Activated CD4-positive, alpha-beta T cell treated with anti-CD3 and anti-CD28 coated beads, Interleukin-2, amount 10 ng/mL, durations not matched to agents 24 days and 14 days (primary cell): ENCODE measurements at regions of chr12 and their contacts with region 1.

Region 1: DNA sequence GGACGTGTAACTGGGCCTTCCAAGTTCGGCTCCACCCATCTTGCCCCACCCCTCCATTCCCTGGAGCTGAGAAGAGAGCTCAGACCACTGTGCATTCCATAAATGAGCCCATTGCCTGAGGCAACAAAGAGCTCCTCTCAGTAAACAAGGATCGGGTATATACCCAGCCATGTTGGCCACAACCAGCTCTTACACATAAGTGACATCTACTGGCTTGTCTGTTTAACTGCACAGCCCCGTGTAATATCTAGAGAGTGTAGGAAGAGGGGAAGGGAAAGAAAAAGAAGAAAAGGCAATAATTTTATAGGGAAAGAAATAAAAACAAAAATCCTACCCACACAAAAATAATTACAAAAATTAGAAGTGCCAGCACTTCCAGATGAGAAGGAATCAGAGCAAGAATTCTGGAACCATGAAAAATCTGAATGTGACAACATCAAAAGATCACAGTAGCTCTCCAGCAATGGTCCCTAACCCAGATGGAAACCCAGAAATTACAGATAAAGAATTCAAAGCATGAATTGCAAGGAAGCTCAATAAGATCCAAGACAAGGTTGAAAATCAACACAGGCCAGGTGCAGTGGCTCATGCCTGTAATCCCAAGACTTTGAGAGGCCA is 308.1 kb downstream of the RPAP3 start:
- DNase-seq: peak; percentile 84
- H3K4me3 Mint-ChIP-seq: peak overlapping the region; percentile 59
- H3K27ac Mint-ChIP-seq: peak overlapping the region; percentile 99
- H3K4me1 Mint-ChIP-seq: peaks cover 79% of the 10 kb centered on the region
- H3K27me3 Mint-ChIP-seq: no peaks in the 10 kb centered on the region

Region 2: GRCh38 chr12:47276621-47277309 is 121.0 kb before region 1 on chr12:
- intact Hi-C with region 1: loop called (anchors 2 kb)
- DNase-seq: peak; percentile 90
- H3K4me3 Mint-ChIP-seq: peak overlapping the region; percentile 57
- H3K27ac Mint-ChIP-seq: peak overlapping the region; percentile 89
- H3K4me1 Mint-ChIP-seq: peaks cover 59% of the 10 kb centered on the region
- H3K27me3 Mint-ChIP-seq: no peaks in the 10 kb centered on the region

Region 3: DNA sequence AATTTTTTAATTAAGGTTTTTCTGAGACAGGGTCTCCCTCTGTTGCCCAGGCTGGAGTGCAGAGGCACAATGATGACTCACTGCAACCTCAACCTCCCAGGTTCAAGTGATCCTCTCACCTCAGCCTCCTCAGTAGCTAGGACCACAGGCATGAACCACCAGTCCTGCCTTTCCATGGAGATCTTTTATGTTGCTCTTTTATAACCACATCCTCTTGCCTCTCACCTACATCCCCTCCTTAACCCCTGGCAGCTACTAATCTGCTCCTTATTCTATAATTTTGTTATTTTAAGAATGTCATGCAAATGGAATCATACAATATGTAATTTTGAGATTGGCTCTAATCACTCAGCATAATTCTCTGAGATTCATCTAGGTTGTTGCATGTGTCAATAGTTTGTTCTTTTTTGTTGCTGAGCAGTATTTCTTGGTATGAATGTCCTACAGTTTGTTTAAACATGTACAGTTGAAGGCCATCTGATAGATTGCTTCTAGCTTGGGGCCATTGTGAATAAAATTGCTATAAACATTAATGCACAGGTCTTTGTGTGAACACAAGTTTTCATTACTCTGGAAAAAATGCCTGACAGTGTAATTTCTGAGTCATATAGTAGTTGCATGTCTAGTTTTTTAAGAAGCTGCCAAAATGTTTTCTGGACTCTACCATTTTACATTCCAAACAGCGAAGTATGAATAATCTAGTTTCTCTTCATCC is 68.8 kb before region 1 on chr12:
- intact Hi-C with region 1: loop called (anchors 2 kb)
- DNase-seq: no peak
- H3K4me3 Mint-ChIP-seq: no peak overlapping the region
- H3K27ac Mint-ChIP-seq: peak overlapping the region; percentile 26
- H3K4me1 Mint-ChIP-seq: peaks cover 23% of the 10 kb centered on the region
- H3K27me3 Mint-ChIP-seq: no peaks in the 10 kb centered on the region

Region 4: DNA sequence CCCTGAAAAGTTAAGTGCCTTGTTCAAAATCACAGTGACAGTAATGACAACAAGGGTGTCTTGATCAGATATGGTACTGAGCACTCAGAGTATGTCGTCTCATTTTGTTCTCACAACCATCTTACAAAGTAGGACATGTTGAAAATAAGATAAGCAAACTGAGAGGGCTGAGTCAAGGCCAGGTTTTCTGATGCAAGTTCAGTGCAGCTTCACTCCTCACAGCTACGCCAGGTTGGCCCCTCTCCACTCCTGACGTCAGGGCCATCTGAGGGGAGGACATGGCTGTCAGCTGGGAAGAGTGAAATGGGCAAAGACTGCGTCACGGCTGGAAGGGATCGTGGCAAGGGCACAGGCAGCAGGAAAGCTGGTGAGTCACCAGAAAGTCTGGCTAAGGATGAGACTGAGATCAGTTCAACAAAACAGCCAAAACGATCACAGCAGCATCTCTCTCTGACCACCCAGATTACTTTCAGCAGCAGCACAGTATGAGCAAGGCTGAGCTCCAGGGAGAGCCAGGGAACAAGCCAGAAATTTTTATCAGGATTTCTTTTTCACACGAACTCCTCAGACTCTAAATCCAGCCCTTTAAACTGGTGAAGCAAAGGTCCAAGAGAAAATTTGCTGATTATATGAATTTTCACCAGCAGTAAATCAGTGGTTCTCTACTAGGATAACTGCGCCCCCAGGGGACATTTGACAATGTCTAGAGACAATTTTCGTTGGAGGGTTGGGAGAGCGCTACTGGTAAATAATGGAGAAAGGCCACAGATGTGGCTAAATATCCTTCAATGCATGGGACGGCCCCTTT is 20.2 kb before region 1 on chr12:
- intact Hi-C with region 1: loop called (anchors 2 kb)
- DNase-seq: peak; percentile 53
- H3K4me3 Mint-ChIP-seq: no peak overlapping the region
- H3K27ac Mint-ChIP-seq: peak overlapping the region; percentile 45
- H3K4me1 Mint-ChIP-seq: peaks cover 35% of the 10 kb centered on the region
- H3K27me3 Mint-ChIP-seq: no peaks in the 10 kb centered on the region

Region 5: DNA sequence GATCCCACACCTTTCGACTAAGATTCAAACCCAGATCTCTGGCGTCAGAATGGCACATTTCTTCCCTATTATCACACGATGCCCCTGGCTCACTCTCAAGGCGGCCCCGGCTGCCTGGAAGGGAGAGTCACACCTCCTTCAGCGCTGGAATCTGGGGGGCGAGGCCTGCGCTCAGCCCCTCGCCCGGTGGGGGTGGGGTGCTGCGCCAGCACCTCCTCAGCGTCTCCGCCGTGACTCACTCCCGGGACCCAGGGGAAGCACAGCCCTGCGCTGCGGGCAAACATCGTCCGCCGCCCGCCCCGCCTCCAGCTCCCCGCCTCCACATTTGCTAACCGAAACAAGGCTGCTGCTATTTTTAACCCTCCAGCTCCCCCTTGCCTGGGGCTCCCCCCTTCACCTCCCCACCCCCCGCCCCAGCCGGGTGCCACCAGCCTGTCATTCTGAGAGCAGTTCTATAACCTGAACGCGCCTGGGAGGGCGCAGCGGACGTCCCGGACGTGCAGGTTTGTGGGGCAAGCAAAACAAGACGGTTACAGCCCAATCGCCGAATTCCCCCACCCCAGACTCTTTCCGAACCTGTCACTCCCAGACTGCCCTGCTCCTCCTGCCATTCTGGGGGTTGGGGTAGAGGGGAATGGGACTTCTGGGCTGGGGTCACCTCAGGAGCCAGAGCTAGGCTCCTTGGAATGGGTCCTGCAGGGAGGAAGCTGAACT is 415.2 kb after region 1 on chr12:
- intact Hi-C with region 1: loop called (anchors 10 kb)
- DNase-seq: peak; percentile 97
- H3K4me3 Mint-ChIP-seq: peak overlapping the region; percentile 88
- H3K27ac Mint-ChIP-seq: peak overlapping the region; percentile 99
- H3K4me1 Mint-ChIP-seq: peaks cover 81% of the 10 kb centered on the region
- H3K27me3 Mint-ChIP-seq: no peaks in the 10 kb centered on the region